ENCODE measurements at regions of chr10 and their contacts with region 1.

Region 1: GRCh38 chr10:101297901-101298486 is 56.0 kb upstream of the BTRC start:
- DNase-seq: peak; percentile 74 to 82
- ATAC-seq: peak; percentile 85 to 93
- H3K4me3 ChIP-seq: no peak overlapping the region
- H3K27ac ChIP-seq: no peak overlapping the region
- H3K4me1 ChIP-seq: no peaks in the 10 kb centered on the region
- CTCF ChIP-seq: peak; percentile 87
- EP300 ChIP-seq: no peak
- POLR2A ChIP-seq: no peak
- RAD21 ChIP-seq: peak in 1 of 2 experiments; percentile 32; a peak in 1 of 5 replicates

Region 2: GRCh38 chr10:101311185-101312066 is 13.4 kb after region 1 on chr10:
- CTCF ChIA-PET with region 1: interaction called, 36 read pairs
- POLR2A ChIA-PET with region 1: interaction called, 4 read pairs
- DNase-seq: no peak
- ATAC-seq: peak in 1 of 2 experiments; percentile 59; a peak in 3 of 6 replicates
- H3K4me3 ChIP-seq: no peak overlapping the region
- H3K27ac ChIP-seq: no peak overlapping the region
- H3K4me1 ChIP-seq: no peaks in the 10 kb centered on the region
- CTCF ChIP-seq: no peak
- EP300 ChIP-seq: no peak
- POLR2A ChIP-seq: no peak
- RAD21 ChIP-seq: no peak

Region 3: GRCh38 chr10:101388671-101389276 is 90.8 kb after region 1 on chr10:
- CTCF ChIA-PET with region 1: no interaction called
- POLR2A ChIA-PET with region 1: no interaction called
- DNase-seq: peak in 1 of 2 experiments; percentile 13
- ATAC-seq: no peak
- H3K4me3 ChIP-seq: no peak overlapping the region
- H3K27ac ChIP-seq: no peak overlapping the region
- H3K4me1 ChIP-seq: peaks cover 10% of the 10 kb centered on the region; the same call in 2 of the 3 replicates
- CTCF ChIP-seq: no peak
- EP300 ChIP-seq: no peak
- POLR2A ChIP-seq: no peak
- RAD21 ChIP-seq: no peak

Measured in A549 (cell line).